Right ventricle myocardium inferior (tissue), 1 donor: ENCODE measurements at regions of chr2 and their contacts with region 1.

Region 1: GRCh38 chr2:69914170-69914960 is 544 bp upstream of the MXD1 start:
- DNase-seq: peak; percentile 98
- ATAC-seq: peak; percentile 96

Region 2: GRCh38 chr2:69741619-69742466 is 172.5 kb before region 1 on chr2 and contains the start of gene ANXA4:
- intact Hi-C with region 1: no loop called
- DNase-seq: peak; percentile 89
- ATAC-seq: peak; percentile 95
- total RNA-seq, gene ANXA4: 27.5 TPM

Region 3: GRCh38 chr2:69858261-69858660 is 56.1 kb before region 1 on chr2:
- intact Hi-C with region 1: no loop called
- DNase-seq: no peak
- ATAC-seq: no peak

Region 4: DNA sequence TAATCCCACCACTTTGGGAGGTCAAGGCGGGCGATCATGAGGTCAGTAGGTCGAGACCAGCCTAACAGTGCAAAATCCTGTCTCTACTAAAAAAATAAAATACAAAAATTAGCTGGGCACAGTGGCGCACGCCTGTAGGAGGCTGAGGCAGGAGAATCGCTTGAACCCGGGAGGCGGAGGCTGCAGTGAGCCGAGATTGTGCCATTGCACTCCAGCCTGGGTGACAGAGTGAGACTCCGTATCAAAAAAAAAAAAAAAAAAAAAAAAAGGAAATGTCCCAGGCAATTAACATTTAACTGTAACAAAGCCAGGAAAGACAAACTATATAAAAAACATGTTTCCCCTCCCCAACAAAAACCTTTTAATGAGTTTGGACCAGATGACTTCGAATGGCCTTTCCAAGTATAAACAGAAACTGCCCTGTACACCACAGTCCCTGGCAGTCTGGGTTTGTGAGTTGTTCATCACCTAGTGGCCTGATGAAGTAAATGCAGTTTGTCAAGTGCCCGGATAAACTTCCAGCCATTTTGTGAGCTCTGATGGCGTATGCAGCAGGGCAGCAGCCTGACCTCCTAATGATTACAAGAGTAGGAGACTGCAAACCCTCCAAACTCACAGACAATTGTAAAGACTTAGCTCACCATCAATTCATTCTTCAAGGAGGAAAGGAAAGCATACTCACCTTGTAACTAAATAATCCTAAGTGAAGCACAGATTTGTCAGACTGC is 156.3 kb after region 1 on chr2:
- intact Hi-C with region 1: loop called (anchors 1 kb)
- DNase-seq: peak; percentile 73
- ATAC-seq: peak; percentile 96

Region 5: GRCh38 chr2:70086838-70087701 is 172.7 kb after region 1 on chr2 and contains the start of gene PCBP1:
- intact Hi-C with region 1: loop called (anchors 2 kb)
- DNase-seq: peak; percentile 98
- ATAC-seq: peak; percentile 89
- total RNA-seq, gene PCBP1: 203 TPM

Region 6: DNA sequence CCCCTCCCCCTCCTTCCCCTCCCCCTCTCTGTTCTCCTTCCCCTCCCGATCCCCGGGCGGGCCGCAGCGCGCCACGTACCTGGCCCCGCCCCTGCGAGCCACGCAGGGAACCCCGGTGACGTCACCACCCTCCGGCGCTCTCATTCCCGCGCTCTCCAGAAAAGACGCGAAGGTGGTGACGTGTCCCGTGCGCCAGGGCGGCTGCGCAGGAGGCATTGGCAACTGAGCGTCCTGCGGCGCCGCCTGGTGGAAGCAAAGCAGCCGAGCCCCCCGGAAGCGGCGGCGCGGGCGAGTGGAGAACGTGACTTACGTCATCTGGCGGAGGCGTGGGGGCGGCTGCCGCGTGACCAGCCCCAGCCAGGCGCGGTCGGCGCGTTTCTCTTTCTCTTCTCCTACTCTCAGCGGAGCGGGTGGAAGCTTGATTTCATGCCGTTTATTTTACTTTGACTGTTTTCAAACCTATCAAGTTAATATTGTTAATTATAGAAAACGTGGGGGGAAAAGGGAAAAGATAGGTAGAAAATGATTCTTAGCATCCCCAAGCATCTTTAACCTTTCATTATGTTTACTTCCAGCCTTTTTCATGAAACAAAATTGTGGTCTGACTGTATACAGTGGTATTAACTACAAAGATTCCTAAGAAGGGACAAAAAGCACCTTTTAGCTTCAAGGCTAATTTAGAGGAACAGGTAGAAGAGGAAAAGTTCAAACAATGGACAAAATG is 228.4 kb after region 1 on chr2:
- intact Hi-C with region 1: loop called (anchors 1 kb)
- DNase-seq: peak; percentile 100
- ATAC-seq: peak; percentile 90

Region 7: DNA sequence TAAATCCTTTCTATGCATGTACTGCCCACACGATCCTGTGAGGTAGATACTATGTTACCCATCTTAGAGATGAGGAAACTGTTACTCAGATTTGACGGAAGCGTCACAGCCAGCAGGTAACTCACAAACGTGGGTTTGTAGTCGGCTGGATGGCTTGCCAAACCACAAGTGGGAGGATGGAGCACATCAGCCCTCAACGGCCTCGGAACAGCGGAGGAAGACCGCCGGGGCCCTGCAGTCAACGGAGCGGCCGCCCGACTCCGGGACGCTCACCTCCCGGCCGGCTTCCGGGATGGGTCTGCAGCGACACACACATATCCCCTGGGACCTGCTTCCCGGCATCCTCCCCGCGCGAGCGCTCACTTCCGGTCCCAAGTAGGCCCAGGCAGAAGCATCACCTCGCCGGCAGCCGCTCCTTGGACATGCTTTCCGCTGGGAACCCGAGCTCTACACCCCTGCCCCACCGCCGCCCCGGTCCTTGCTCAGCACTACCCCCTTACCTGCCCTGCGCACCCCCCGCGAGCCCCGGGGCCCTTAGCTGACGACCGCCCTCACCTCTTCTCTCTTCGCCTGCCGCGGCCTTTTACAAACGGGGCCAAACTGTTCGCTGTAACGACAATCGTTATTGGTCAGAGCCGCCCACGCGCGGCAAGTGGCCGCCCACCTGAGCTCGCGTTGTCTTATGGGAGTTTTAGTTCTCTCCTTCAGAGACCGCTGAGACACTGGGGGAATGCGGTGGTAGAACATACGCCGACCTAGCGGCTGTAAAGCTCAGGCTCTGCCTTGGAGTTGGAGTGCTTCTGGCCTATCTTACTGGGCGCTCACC is 276.3 kb after region 1 on chr2 and contains the start of gene C2orf42:
- intact Hi-C with region 1: loop called (anchors 1 kb)
- DNase-seq: peak; percentile 96
- ATAC-seq: peak; percentile 98
- total RNA-seq, gene C2orf42: 14.1 TPM

Region 8: DNA sequence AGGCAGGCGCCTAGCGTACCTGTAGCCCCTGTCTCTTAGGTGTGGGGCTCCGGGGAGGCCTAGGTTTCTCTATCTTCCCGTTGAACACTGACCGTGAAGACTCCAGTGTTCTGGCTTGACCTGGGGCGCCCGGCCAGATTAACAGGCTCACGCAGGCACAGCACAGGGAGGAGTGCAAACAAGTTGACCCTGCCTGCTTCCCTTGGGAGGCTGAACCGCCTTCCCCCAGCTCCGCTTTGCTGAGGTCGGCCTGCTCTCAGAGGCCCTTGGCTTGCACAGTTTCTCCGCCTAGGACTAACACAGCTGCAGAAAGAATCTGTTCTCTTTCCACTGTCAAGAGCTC is 344.1 kb after region 1 on chr2:
- intact Hi-C with region 1: loop called (anchors 5 kb)
- DNase-seq: peak; percentile 90
- ATAC-seq: peak; percentile 80

Region 9: DNA sequence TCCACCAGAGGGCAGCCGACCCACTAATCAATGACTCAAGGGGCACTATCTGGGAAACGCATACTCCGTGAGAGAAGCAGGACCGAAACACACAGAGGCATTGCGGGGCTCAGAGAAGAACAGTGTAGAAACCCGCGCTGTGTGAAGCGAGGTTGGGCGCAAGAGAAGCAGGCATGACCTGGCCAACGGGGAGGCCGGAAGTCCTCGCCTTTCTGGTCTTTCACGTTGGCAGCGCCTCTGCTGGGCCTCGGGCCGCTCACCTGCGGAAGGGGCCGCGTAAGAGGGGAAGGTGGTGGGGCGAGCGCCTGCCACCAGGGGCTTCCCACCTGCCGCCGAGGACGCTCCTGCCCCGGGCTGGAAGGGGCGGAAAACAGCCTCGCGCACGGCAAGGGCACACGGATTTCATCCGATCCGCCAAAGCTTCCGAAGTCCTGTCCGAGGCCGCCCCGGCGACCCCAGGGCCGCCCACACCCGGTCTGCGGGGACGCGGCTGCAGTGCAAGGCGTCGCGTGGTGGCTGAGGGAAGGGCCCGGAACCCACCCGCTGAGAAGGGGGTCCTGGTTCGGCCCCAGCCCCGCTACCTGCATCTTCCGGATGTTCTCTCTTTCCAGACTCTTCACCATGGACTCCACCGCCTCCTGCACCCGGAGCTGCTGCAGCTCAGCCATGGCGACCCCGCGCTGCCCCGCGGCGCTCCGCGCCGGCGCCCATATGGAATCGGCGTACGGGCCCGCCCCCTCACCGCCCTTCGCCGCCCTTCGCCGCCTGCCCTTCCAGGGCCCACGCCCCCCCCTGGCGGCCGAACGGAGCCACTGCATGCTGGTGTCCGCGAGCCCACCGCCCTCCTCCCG is 387.2 kb after region 1 on chr2 and contains the start of gene FAM136A:
- intact Hi-C with region 1: loop called (anchors 5 kb)
- DNase-seq: peak; percentile 96
- ATAC-seq: peak; percentile 95
- total RNA-seq, gene FAM136A: 26.0 TPM